ENCODE measurements at regions of chr3 and their contacts with region 1.

Region 1: DNA sequence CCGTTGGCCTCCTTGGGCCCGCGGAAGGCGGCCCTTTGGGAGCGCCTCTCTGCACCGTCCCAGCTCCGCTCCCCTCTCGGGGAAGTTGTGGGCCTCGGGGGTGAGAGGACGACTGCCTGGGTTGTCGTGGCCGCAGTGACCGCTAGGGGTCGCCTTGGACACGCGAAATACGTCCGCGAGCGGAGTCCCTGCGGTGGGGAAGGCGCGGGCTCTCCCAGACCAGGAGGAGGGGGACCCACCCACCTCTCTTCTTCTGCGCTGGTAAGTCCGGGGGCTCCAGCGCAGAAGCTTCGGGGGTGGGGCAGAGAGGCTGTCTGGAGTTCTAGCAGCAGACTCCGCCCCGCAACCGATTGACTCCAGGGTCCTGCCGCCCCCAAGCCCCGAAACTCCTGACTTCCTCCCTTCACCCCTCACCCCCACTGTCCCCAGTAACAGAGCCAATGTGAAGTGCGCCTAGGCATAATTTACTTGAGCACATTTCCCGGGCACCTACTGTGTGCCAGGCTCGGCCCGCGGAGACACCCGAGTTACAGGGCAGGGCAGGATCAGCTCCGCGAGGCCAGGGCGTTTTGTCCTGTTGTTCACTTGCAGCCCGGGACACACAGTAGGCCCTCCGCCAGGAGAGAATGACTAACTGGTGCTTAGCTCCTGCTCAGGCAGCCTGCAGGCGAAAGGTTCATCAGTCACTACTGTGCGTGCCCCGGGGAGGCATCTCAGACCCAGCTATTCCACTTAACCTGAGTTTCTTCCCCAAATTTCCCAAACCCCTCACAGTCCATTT is 32.8 kb downstream of the DNASE1L3 start:
- DNase-seq: peak; percentile 72 to 92 (median 84)
- ATAC-seq: peak; percentile 94
- H3K4me3 ChIP-seq: peak overlapping the region; percentile 49
- H3K4me3 Mint-ChIP-seq: peak overlapping the region; percentile 51 to 84 (median 74)
- H3K27ac ChIP-seq: no peak overlapping the region
- H3K27ac Mint-ChIP-seq: peak overlapping the region in 3 of 9 donors; percentile 18 to 43 (median 29)
- H3K4me1 ChIP-seq: peaks cover 6 to 8% of the 10 kb centered on the region in 2 donors
- H3K4me1 Mint-ChIP-seq: peaks cover 4 to 17% (median 13%) of the 10 kb centered on the region in 7 donors
- H3K27me3 ChIP-seq: no peaks in the 10 kb centered on the region
- H3K27me3 Mint-ChIP-seq: peaks cover 0 to 4% (median 0%) of the 10 kb centered on the region in 5 donors

Region 2: DNA sequence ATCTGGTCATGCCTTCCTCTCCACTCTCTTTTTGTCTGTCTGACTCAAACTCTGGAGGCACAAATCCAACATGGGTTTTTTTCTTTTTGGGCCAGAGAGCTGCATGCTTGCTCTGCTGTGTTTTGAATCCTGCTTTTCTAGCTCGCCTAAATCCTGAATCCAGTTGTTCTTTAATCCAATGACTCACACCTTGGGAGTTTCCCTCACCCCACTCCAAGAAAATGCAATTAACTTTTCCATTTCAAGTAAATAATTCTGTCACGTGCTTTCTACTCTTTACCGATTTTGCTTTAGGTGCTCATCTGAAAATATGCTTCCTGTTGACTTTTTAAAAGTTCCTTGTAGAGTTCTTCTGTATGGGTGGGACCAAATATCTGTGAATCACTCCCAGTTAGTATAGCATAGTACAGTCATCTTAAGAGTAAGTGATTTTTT is 374.3 kb before region 1 on chr3:
- CTCF ChIA-PET with region 1: no interaction called
- POLR2A ChIA-PET with region 1: no interaction called
- intact Hi-C with region 1: no loop called
- DNase-seq: peak in 5 of 9 donors; percentile 13 to 35 (median 28)
- ATAC-seq: peak; percentile 71
- H3K4me3 ChIP-seq: peak overlapping the region; percentile 19
- H3K4me3 Mint-ChIP-seq: peak overlapping the region; percentile 13 to 88 (median 79)
- H3K27ac ChIP-seq: peak overlapping the region; percentile 12
- H3K27ac Mint-ChIP-seq: peak overlapping the region; percentile 34 to 94 (median 89)
- H3K4me1 ChIP-seq: peaks cover 8 to 20% of the 10 kb centered on the region in 2 donors
- H3K4me1 Mint-ChIP-seq: peaks cover 45 to 90% (median 77%) of the 10 kb centered on the region in 7 donors
- H3K27me3 ChIP-seq: no peaks in the 10 kb centered on the region
- H3K27me3 Mint-ChIP-seq: no peaks in the 10 kb centered on the region

Region 3: GRCh38 chr3:57961828-57962447 is 216.0 kb before region 1 on chr3:
- CTCF ChIA-PET with region 1: interaction called, 3 read pairs
- POLR2A ChIA-PET with region 1: no interaction called
- intact Hi-C with region 1: loop called in 1 of 2 experiments (anchors 5 kb)
- DNase-seq: peak in 4 of 9 donors; percentile 8 to 21 (median 18)
- ATAC-seq: no peak
- H3K4me3 ChIP-seq: no peak overlapping the region
- H3K4me3 Mint-ChIP-seq: no peak overlapping the region
- H3K27ac ChIP-seq: no peak overlapping the region
- H3K27ac Mint-ChIP-seq: no peak overlapping the region
- H3K4me1 ChIP-seq: peaks cover 0 to 2% of the 10 kb centered on the region in 2 donors
- H3K4me1 Mint-ChIP-seq: peaks cover 3 to 13% (median 8%) of the 10 kb centered on the region in 7 donors
- H3K27me3 ChIP-seq: no peaks in the 10 kb centered on the region
- H3K27me3 Mint-ChIP-seq: peaks cover 0 to 1% (median 0%) of the 10 kb centered on the region in 5 donors

Region 4: GRCh38 chr3:58082047-58082446 is 95.9 kb before region 1 on chr3:
- CTCF ChIA-PET with region 1: interaction called, 3 read pairs
- POLR2A ChIA-PET with region 1: no interaction called
- intact Hi-C with region 1: loop called in 1 of 2 experiments (anchors 5 kb)
- DNase-seq: peak in 8 of 9 donors; percentile 27 to 82 (median 69)
- ATAC-seq: peak; percentile 79
- H3K4me3 ChIP-seq: no peak overlapping the region
- H3K4me3 Mint-ChIP-seq: peak overlapping the region; percentile 46 to 83 (median 76)
- H3K27ac ChIP-seq: peak overlapping the region; percentile 38
- H3K27ac Mint-ChIP-seq: peak overlapping the region; percentile 85 to 97 (median 94)
- H3K4me1 ChIP-seq: peaks cover 0 to 54% of the 10 kb centered on the region in 2 donors
- H3K4me1 Mint-ChIP-seq: peaks cover 35 to 71% (median 56%) of the 10 kb centered on the region in 7 donors
- H3K27me3 ChIP-seq: no peaks in the 10 kb centered on the region
- H3K27me3 Mint-ChIP-seq: no peaks in the 10 kb centered on the region

Region 5: DNA sequence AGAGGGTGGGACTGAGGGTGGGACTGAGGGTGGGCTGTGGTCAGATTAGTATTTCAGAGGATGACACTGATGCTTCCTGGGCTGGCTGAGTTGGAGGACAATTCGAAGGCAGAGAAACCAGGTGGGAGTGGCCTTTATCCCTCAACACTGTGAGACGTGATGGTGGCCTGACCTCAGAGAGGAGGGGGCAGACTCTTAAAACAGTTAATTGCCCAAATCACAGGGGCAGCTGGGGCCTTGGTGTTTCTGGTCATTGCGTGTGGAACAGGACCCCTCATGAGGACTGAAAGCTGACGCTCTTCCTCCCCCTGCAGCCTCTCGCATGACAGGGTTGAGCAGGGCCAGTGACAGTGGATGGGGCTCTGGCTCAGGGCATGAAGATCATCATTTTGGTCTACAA is 14.1 kb after region 1 on chr3:
- CTCF ChIA-PET with region 1: no interaction called
- POLR2A ChIA-PET with region 1: no interaction called
- intact Hi-C with region 1: no loop called
- DNase-seq: no peak
- ATAC-seq: no peak
- H3K4me3 ChIP-seq: no peak overlapping the region
- H3K4me3 Mint-ChIP-seq: no peak overlapping the region
- H3K27ac ChIP-seq: no peak overlapping the region
- H3K27ac Mint-ChIP-seq: no peak overlapping the region
- H3K4me1 ChIP-seq: no peaks in the 10 kb centered on the region
- H3K4me1 Mint-ChIP-seq: peaks cover 0 to 3% (median 0%) of the 10 kb centered on the region in 7 donors
- H3K27me3 ChIP-seq: no peaks in the 10 kb centered on the region
- H3K27me3 Mint-ChIP-seq: no peaks in the 10 kb centered on the region

Region 6: DNA sequence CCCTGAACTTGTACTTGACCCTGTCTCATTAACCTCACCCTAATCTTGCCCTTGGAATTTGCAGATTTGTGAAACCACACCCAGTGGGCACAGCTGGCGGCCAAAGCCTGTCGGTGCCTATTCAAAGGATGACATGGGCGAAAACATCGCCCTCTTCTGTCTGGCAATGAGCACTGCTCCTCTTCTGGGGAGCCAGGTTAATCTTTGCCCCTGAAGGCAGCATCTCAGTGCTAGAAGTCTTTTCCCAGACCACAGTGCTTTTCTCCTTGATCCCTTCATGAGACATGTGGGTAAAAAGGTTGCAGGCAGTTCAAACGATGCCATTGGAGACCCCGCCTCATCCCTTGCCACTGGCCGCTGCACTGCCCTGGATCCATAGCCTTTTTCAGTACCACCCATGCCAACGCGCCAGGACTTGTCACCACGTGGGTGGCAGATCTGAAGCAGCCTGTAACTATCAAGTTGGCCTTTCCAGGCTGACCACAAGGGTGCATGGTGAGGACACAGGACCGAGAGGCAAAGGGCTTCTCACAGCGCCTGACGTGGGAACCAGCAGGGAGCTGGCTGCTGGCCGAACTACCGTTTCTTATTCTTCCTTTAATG is 39.4 kb after region 1 on chr3:
- CTCF ChIA-PET with region 1: interaction called, 15 read pairs
- POLR2A ChIA-PET with region 1: no interaction called
- intact Hi-C with region 1: loop called (anchors 1 to 5 kb)
- DNase-seq: peak; percentile 21 to 64 (median 52)
- ATAC-seq: peak; percentile 86
- H3K4me3 ChIP-seq: no peak overlapping the region
- H3K4me3 Mint-ChIP-seq: peak overlapping the region in 4 of 10 donors; percentile 12 to 45 (median 26)
- H3K27ac ChIP-seq: no peak overlapping the region
- H3K27ac Mint-ChIP-seq: no peak overlapping the region
- H3K4me1 ChIP-seq: peaks cover 0 to 3% of the 10 kb centered on the region in 2 donors
- H3K4me1 Mint-ChIP-seq: peaks cover 0 to 17% (median 7%) of the 10 kb centered on the region in 7 donors
- H3K27me3 ChIP-seq: no peaks in the 10 kb centered on the region
- H3K27me3 Mint-ChIP-seq: peaks cover 3 to 10% (median 4%) of the 10 kb centered on the region in 5 donors

Region 7: GRCh38 chr3:58237238-58237940 is 59.5 kb after region 1 on chr3 and contains the start of gene ABHD6:
- CTCF ChIA-PET with region 1: no interaction called
- POLR2A ChIA-PET with region 1: no interaction called
- intact Hi-C with region 1: loop called in 1 of 2 experiments (anchors 5 kb)
- DNase-seq: peak; percentile 58 to 95 (median 86)
- ATAC-seq: peak; percentile 91
- H3K4me3 ChIP-seq: peak within 1 kb of the TSS; percentile 86
- H3K4me3 Mint-ChIP-seq: peak within 1 kb of the TSS; percentile 84 to 98 (median 92)
- H3K27ac ChIP-seq: peak within 1 kb of the TSS; percentile 72
- H3K27ac Mint-ChIP-seq: peak within 1 kb of the TSS; percentile 50 to 87 (median 81)
- H3K4me1 ChIP-seq: peaks cover 6 to 12% of the 10 kb centered on the region in 2 donors
- H3K4me1 Mint-ChIP-seq: peaks cover 9 to 18% (median 13%) of the 10 kb centered on the region in 7 donors
- H3K27me3 ChIP-seq: no peaks in the 10 kb centered on the region
- H3K27me3 Mint-ChIP-seq: peaks cover 0 to 29% (median 13%) of the 10 kb centered on the region in 5 donors
- total RNA-seq, gene ABHD6: 3.1 to 7.3 (median 6.6) TPM